ENCODE measurements at regions of chr6 and their contacts with region 1.

Region 1: GRCh38 chr6:141483598-141484061 is 649.1 kb upstream of the GJE1 start:
- DNase-seq: peak; percentile 85
- ATAC-seq: peak; percentile 96
- H3K4me3 ChIP-seq: peak overlapping the region; percentile 51
- H3K27ac ChIP-seq: peak overlapping the region; percentile 74
- H3K4me1 ChIP-seq: peaks cover 5% of the 10 kb centered on the region
- H3K27me3 ChIP-seq: no peaks in the 10 kb centered on the region
- CTCF ChIP-seq: no peak
- EP300 ChIP-seq: peak; percentile 94 to 99
- POLR2A ChIP-seq: no peak
- RAD21 ChIP-seq: peak; percentile 21; the same call in 1 of the 2 replicates

Region 2: GRCh38 chr6:141388666-141389065 is 95.0 kb before region 1 on chr6:
- CTCF ChIA-PET with region 1: no interaction called
- POLR2A ChIA-PET with region 1: no interaction called
- RAD21 ChIA-PET with region 1: no interaction called
- SMC1A ChIA-PET with region 1: interaction called, 3 read pairs
- in situ Hi-C with region 1: no loop called
- intact Hi-C with region 1: loop called (anchors 5 kb)
- DNase-seq: no peak
- ATAC-seq: no peak
- H3K4me3 ChIP-seq: no peak overlapping the region
- H3K27ac ChIP-seq: no peak overlapping the region
- H3K4me1 ChIP-seq: no peaks in the 10 kb centered on the region
- H3K27me3 ChIP-seq: no peaks in the 10 kb centered on the region
- CTCF ChIP-seq: no peak
- EP300 ChIP-seq: no peak
- POLR2A ChIP-seq: no peak
- RAD21 ChIP-seq: no peak

Region 3: DNA sequence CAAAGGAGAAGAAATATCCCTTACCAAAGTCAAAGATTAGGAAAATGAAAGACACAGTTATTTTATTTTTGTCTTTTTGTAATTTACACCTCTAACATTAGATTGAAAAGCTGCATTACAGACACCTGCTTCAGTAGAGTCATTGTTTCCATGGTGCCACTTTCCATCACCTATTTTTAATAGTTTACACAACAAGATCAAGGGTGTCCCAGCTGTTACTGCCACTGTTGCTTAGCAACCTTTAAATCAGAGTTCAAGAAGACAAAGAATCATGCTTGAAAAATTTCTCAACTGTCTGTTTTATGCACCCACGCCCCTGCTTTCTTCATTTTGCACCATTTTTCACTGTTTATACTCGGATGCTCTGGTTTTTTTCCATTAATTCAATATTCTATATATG is 19.1 kb before region 1 on chr6:
- CTCF ChIA-PET with region 1: interaction called, 9 read pairs
- POLR2A ChIA-PET with region 1: interaction called, 10 read pairs
- RAD21 ChIA-PET with region 1: interaction called, 32 read pairs
- SMC1A ChIA-PET with region 1: interaction called, 86 read pairs
- in situ Hi-C with region 1: no loop called
- intact Hi-C with region 1: no loop called
- DNase-seq: no peak
- ATAC-seq: peak; percentile 88
- H3K4me3 ChIP-seq: no peak overlapping the region
- H3K27ac ChIP-seq: no peak overlapping the region
- H3K4me1 ChIP-seq: peaks cover 9% of the 10 kb centered on the region
- H3K27me3 ChIP-seq: no peaks in the 10 kb centered on the region
- CTCF ChIP-seq: no peak
- EP300 ChIP-seq: peak; percentile 13 to 93; a peak in 3 of 4 replicates
- POLR2A ChIP-seq: no peak
- RAD21 ChIP-seq: no peak

Region 4: GRCh38 chr6:141552473-141552878 is 68.8 kb after region 1 on chr6:
- CTCF ChIA-PET with region 1: no interaction called
- POLR2A ChIA-PET with region 1: no interaction called
- RAD21 ChIA-PET with region 1: no interaction called
- SMC1A ChIA-PET with region 1: interaction called, 6 read pairs
- in situ Hi-C with region 1: no loop called
- intact Hi-C with region 1: loop called (anchors 2 kb)
- DNase-seq: peak; percentile 34
- ATAC-seq: peak; percentile 88
- H3K4me3 ChIP-seq: no peak overlapping the region
- H3K27ac ChIP-seq: no peak overlapping the region
- H3K4me1 ChIP-seq: no peaks in the 10 kb centered on the region
- H3K27me3 ChIP-seq: no peaks in the 10 kb centered on the region
- CTCF ChIP-seq: no peak
- EP300 ChIP-seq: peak in 1 of 2 experiments; percentile 67; a peak in 2 of 4 replicates
- POLR2A ChIP-seq: no peak
- RAD21 ChIP-seq: no peak

Measured in GM12878 (cell line).